Ascending aorta (tissue), 2 donors: ENCODE measurements at regions of chr6 and their contacts with region 1.

Region 1: GRCh38 chr6:136582711-136583471 is 32.7 kb upstream of the MAP7 start:
- DNase-seq: no peak
- H3K4me3 ChIP-seq: no peak overlapping the region
- H3K27ac ChIP-seq: peak overlapping the region; percentile 81 to 86
- H3K4me1 ChIP-seq: peaks cover 5 to 42% of the 10 kb centered on the region in 2 donors
- H3K27me3 ChIP-seq: no peaks in the 10 kb centered on the region
- CTCF ChIP-seq: peak; percentile 50 to 65 (median 63)

Region 2: DNA sequence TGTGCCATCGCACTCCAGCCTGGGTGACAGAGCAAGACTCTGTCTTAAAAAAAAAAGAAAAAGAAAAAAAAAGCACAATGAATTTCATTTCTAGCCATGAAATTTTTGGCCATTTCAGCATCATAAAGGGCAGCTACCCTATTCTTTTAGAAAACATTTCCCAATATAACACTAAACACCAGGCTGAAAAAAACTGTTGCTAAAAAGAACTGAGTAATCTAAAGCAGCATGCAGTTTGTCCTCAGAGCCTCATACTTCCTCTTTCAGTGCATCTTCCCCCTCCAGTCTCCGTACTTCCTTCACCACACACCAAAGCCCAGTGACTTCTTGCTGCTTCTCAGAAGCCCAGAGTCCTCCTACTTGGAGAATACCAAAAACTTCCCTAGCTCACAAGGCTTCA is 641.9 kb after region 1 on chr6:
- intact Hi-C with region 1: loop called (anchors 10 kb)
- DNase-seq: no peak
- H3K4me3 ChIP-seq: no peak overlapping the region
- H3K27ac ChIP-seq: peak overlapping the region; percentile 58 to 81
- H3K4me1 ChIP-seq: peaks cover 2 to 34% of the 10 kb centered on the region in 2 donors
- H3K27me3 ChIP-seq: no peaks in the 10 kb centered on the region
- CTCF ChIP-seq: no peak